ENCODE measurements at regions of chr5 and their contacts with region 1.

Region 1: DNA sequence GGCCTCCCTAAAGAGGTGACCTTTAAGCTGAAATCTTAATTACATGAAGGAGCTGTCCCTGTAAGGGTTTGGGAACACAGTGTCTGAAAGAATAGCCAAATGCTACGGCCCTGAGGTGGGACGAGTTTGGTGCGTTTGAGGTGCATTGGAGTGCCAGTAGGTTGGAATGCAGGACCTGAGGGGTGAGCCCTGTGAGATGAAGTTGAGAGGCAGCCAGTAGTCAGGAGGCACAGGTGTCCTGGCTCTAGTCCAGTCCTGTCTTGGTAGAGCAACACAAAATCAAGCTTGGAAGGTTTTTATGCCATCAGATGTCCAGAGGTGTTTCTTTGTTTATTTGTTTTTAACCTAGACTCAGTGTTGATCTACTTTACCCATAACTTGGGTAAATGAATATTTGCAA is 108.5 kb downstream of the ARHGAP26 start:
- DNase-seq: no peak
- ATAC-seq: no peak
- H3K4me3 ChIP-seq: no peak overlapping the region
- H3K27ac ChIP-seq: no peak overlapping the region
- H3K4me1 ChIP-seq: peaks cover 38% of the 10 kb centered on the region
- H3K27me3 ChIP-seq: no peaks in the 10 kb centered on the region
- CTCF ChIP-seq: no peak

Region 2: DNA sequence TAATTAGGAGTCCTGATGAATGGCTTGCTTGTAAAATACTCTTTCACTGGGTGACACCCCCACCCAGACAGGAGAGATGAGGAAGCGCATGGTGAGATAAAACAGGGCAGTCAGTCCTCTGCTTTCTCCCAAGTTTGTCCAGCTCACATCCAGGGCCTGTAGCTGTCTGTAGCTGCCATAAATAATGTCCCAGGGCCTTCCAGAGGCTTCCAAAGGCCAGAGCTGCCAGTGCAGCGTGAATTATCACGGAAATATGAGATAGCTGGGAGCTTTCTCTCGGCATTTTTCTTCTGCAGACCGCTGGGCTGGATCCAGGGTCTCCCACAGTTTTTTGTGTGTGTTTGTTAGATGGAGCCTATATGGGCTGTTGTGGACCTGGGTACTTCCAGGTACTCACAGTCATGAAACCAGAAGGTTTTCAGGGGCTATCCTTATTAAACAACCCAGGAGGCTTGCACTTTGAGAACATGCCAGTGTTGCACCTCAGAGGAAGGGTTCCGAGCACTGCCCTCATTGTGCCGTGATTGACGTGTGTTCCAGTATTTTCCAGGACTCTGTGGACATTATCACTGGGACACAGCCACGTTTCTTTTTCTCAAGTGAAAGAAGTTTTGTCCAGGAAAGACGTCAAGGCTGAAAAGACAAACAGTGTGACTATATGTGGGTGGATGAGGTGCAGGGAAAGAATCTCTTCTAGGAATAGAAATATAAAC is 310.2 kb before region 1 on chr5:
- intact Hi-C with region 1: no loop called
- DNase-seq: no peak
- ATAC-seq: no peak
- H3K4me3 ChIP-seq: no peak overlapping the region
- H3K27ac ChIP-seq: no peak overlapping the region
- H3K4me1 ChIP-seq: no peaks in the 10 kb centered on the region
- H3K27me3 ChIP-seq: no peaks in the 10 kb centered on the region
- CTCF ChIP-seq: no peak

Region 3: DNA sequence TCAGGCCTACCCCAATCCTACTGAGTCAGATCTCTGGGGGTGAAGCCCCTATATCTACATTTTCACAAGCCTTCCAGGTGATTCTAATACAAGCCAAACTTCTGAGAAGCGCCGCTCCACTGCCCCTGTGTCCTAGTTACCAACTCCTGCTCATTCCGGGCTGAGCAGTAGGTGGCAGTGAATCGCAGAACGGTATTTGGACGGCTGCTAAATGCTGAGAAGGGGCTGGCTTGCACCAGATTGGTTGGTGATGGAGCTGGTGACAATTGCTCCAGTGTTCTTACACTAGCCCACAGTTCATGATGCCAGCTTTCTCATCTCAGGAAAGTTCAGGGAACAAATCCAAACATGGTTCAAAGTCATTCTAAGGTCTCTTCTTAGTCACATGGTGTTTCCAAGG is 161.7 kb before region 1 on chr5:
- intact Hi-C with region 1: loop called (anchors 5 kb)
- DNase-seq: no peak
- ATAC-seq: peak; percentile 49
- H3K4me3 ChIP-seq: no peak overlapping the region
- H3K27ac ChIP-seq: no peak overlapping the region
- H3K4me1 ChIP-seq: peaks cover 9% of the 10 kb centered on the region
- H3K27me3 ChIP-seq: no peaks in the 10 kb centered on the region
- CTCF ChIP-seq: peak; percentile 48

Region 4: DNA sequence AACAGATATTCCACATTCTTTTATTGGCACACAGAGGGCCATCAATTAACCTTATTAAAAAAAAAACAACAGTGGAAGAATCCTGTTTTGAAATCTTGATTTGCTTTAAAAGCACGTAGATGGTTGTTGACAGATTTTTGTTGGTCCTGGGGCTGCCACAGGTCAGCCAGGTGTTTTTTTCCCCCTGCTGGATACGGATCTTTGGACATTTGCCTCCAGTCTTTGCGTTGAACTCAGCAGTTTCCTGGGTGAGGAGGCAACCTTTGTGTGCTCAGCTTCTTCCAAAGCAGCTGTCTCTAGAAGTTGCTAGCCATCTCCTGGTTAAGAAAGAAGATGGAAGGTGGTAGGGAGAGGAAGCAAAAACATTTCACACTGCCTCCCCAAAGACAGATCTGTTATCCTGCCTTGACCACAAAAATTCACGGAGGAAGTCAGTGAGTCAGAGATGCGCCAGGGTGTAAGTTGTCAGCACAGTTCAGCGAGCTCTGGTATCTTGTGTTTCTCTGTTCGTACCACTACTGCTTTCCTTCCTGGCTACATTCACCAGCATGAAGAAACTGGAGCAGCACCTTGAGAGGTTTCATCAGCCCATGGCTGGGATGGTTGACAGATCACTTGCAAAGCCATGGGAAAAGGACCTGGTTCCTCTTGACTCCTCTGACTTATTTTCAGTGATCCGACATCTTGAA is 98.9 kb after region 1 on chr5:
- intact Hi-C with region 1: no loop called
- DNase-seq: no peak
- ATAC-seq: peak; percentile 68
- H3K4me3 ChIP-seq: no peak overlapping the region
- H3K27ac ChIP-seq: no peak overlapping the region
- H3K4me1 ChIP-seq: peaks cover 38% of the 10 kb centered on the region
- H3K27me3 ChIP-seq: no peaks in the 10 kb centered on the region
- CTCF ChIP-seq: no peak

Region 5: DNA sequence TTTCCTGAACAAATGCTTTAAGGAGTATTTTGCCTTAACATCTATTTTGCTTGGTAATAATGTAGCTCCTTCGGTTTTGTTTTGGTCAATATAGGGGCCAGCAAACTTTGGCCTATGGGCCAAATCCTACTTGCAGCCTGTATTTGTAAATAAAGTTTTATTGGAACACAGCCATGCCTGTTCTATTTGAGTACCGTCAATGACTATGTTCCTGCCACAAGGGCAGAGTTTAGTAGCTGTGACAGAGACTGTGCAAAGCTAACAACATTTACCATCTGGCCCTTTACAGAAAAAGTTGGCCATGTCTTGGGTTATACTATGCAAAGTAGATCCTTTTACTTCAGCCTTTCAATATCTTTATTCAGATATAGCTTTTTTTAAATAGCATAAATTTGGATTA is 411.5 kb after region 1 on chr5:
- intact Hi-C with region 1: no loop called
- DNase-seq: no peak
- ATAC-seq: no peak
- H3K4me3 ChIP-seq: no peak overlapping the region
- H3K27ac ChIP-seq: no peak overlapping the region
- H3K4me1 ChIP-seq: no peaks in the 10 kb centered on the region
- H3K27me3 ChIP-seq: no peaks in the 10 kb centered on the region
- CTCF ChIP-seq: no peak

Measured in upper lobe of right lung (tissue), 1 donor.